PC-9 (cell line): ENCODE measurements at regions of chr12 and their contacts with region 1.

Region 1: GRCh38 chr12:75825686-75826085 is 205.9 kb downstream of the PHLDA1 start:
- DNase-seq: peak; percentile 40 to 94
- H3K4me3 ChIP-seq: peak overlapping the region; percentile 21; the same call in 1 of the 2 replicates
- H3K27ac ChIP-seq: peak overlapping the region; percentile 87
- H3K4me1 ChIP-seq: peaks cover 41% of the 10 kb centered on the region
- H3K27me3 ChIP-seq: no peaks in the 10 kb centered on the region
- CTCF ChIP-seq: no peak

Region 2: GRCh38 chr12:75641031-75641780 is 184.5 kb before region 1 on chr12:
- CTCF ChIA-PET with region 1: no interaction called
- POLR2A ChIA-PET with region 1: interaction called, 11 read pairs
- intact Hi-C with region 1: no loop called
- DNase-seq: peak in 1 of 2 experiments; percentile 13
- H3K4me3 ChIP-seq: no peak overlapping the region
- H3K27ac ChIP-seq: no peak overlapping the region
- H3K4me1 ChIP-seq: peaks cover 3% of the 10 kb centered on the region
- H3K27me3 ChIP-seq: no peaks in the 10 kb centered on the region
- CTCF ChIP-seq: no peak

Region 3: GRCh38 chr12:75750716-75751306 is 74.9 kb before region 1 on chr12:
- CTCF ChIA-PET with region 1: no interaction called
- POLR2A ChIA-PET with region 1: no interaction called
- intact Hi-C with region 1: no loop called
- DNase-seq: no peak
- H3K4me3 ChIP-seq: no peak overlapping the region
- H3K27ac ChIP-seq: no peak overlapping the region
- H3K4me1 ChIP-seq: no peaks in the 10 kb centered on the region
- H3K27me3 ChIP-seq: no peaks in the 10 kb centered on the region
- CTCF ChIP-seq: no peak

Region 4: GRCh38 chr12:75862692-75863471 is 37.2 kb after region 1 on chr12:
- CTCF ChIA-PET with region 1: no interaction called
- POLR2A ChIA-PET with region 1: no interaction called
- intact Hi-C with region 1: loop called (anchors 5 kb)
- DNase-seq: peak; percentile 4 to 94
- H3K4me3 ChIP-seq: no peak overlapping the region
- H3K27ac ChIP-seq: peak overlapping the region; percentile 93
- H3K4me1 ChIP-seq: peaks cover 61% of the 10 kb centered on the region
- H3K27me3 ChIP-seq: no peaks in the 10 kb centered on the region
- CTCF ChIP-seq: no peak

Region 5: GRCh38 chr12:75908961-75909605 is 83.4 kb after region 1 on chr12:
- CTCF ChIA-PET with region 1: no interaction called
- POLR2A ChIA-PET with region 1: no interaction called
- intact Hi-C with region 1: no loop called
- DNase-seq: no peak
- H3K4me3 ChIP-seq: no peak overlapping the region
- H3K27ac ChIP-seq: no peak overlapping the region
- H3K4me1 ChIP-seq: no peaks in the 10 kb centered on the region
- H3K27me3 ChIP-seq: no peaks in the 10 kb centered on the region
- CTCF ChIP-seq: no peak